Activated B cell treated with CpG ODN at 0.5 μM for 24 hours (primary cell): ENCODE measurements at regions of chr2 and their contacts with region 1.

Region 1: GRCh38 chr2:145729993-145730770 is 1210.3 kb upstream of the ZEB2 start:
- DNase-seq: no peak
- ATAC-seq: no peak
- H3K4me3 Mint-ChIP-seq: no peak overlapping the region
- H3K27ac Mint-ChIP-seq: no peak overlapping the region
- H3K4me1 Mint-ChIP-seq: peaks cover 4% of the 10 kb centered on the region
- H3K27me3 Mint-ChIP-seq: no peaks in the 10 kb centered on the region
- CTCF ChIP-seq: no peak

Region 2: DNA sequence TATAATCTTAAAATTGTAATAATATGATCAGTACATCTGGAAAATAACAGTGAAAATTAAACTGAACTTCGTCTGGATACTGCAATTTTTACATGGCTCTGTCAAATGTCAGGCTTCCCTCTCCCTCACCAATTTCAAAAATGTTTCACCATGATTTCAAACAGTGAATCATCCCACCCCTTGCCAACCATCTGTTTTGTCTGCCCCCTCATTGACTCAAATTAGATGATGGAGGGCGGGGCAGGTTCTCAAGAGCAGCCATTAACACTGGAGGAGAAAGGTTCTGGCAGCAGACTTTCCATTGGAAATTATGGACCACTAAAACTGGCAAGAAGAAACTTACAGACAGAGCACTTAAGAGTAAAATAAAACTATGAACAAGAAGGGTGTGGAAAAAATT is 14.6 kb before region 1 on chr2:
- CTCF ChIA-PET with region 1: no interaction called
- POLR2A ChIA-PET with region 1: no interaction called
- intact Hi-C with region 1: loop called (anchors 2 kb)
- DNase-seq: no peak
- ATAC-seq: no peak
- H3K4me3 Mint-ChIP-seq: no peak overlapping the region
- H3K27ac Mint-ChIP-seq: no peak overlapping the region
- H3K4me1 Mint-ChIP-seq: no peaks in the 10 kb centered on the region
- H3K27me3 Mint-ChIP-seq: no peaks in the 10 kb centered on the region
- CTCF ChIP-seq: no peak